Breast epithelium (tissue), 4 donors: ENCODE measurements at regions of chr17 and their contacts with region 1.

Region 1: DNA sequence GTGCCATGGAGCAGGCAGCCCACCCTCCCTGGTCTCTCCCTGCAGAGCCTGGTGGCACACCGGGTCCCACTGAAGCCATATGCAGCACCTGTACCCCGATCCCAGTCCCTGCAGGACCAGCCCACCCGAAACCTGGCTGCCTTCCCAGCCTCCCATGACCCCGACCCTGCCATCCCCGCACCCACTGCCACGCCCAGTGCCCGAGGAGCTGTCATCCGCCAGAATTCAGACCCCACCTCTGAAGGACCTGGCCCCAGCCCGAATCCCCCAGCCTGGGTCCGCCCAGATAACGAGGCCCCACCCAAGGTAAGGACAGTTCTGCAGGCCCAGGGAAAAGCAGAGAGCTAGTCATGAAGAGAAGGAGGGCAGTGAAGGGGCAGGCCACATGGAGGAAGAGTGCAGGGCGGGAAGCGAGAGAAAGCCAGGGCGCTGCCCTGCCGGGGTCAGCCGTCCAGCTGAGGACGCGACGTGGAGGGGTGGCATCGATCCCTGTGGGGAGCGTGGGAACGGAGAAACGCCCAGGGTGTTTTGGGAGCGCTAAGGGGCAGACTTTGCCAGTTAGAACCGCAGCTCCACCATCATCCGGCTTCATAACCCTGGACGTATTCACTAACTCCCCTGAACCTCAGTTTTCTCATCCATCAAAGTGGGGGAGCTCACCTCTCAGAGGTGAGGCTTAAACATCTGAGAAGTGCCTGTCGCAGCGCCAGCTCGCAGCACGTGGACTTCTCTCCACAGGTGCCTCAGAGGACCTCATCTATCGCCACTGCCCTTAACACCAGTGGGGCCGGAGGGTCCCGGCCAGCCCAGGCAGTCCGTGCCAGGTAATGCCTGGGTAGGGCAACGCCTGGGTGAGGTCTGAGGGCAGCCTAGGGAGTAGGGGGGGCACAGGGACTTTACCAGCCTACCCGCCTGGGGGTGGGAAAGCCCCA is 7.7 kb upstream of the C17orf107 start:
- DNase-seq: no peak
- H3K4me3 ChIP-seq: no peak overlapping the region
- H3K27ac ChIP-seq: no peak overlapping the region
- H3K4me1 ChIP-seq: no peaks in the 10 kb centered on the region
- H3K27me3 ChIP-seq: no peaks in the 10 kb centered on the region
- CTCF ChIP-seq: no peak
- POLR2A ChIP-seq: no peak

Region 2: DNA sequence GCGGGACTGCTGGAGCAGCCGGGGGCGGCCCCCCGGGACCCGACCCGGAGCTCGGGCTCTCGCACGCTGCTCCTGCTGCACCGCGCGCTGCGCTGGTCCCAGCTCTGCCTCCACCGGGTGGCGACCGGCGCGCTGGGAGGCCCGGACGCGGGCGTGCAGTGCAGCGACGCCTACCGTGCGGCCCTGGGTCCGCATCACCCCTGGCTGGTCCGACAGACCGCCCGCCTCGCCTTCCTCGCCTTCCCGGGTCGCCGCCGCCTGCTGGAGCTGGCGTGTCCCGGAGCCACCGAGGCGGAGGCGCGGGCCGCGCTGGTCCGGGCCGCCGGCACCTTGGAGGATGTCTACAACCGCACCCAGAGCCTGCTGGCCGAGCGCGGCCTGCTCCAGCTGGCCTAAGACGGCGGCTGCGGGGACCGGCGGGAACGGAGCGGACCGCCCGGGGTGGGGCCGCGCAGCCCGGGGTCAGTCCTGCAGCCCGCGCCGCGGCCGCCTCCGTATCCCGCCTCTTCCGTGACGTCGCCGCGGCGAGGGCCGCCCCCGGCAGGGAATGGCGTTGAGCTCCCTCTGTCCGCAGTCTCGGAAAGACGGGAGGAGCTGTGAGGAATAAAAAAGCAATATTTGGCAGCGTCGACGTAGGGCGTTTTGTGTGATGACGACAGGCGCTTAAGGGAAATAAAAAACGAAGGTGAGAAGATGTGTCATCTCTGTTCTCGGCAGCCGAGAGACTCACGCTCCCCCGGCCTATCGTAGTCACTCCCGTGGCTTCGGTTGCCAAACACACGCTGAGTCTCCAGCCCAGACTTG is 101.6 kb before region 1 on chr17:
- intact Hi-C with region 1: loop called (anchors 5 kb)
- DNase-seq: peak; percentile 75 to 80
- H3K4me3 ChIP-seq: peak overlapping the region; percentile 63 to 92 (median 79)
- H3K27ac ChIP-seq: peak overlapping the region; percentile 91 to 97
- H3K4me1 ChIP-seq: peaks cover 0 to 7% of the 10 kb centered on the region in 2 donors
- H3K27me3 ChIP-seq: no peaks in the 10 kb centered on the region
- CTCF ChIP-seq: peak; percentile 39 to 90 (median 53)
- POLR2A ChIP-seq: peak; percentile 52

Region 3: DNA sequence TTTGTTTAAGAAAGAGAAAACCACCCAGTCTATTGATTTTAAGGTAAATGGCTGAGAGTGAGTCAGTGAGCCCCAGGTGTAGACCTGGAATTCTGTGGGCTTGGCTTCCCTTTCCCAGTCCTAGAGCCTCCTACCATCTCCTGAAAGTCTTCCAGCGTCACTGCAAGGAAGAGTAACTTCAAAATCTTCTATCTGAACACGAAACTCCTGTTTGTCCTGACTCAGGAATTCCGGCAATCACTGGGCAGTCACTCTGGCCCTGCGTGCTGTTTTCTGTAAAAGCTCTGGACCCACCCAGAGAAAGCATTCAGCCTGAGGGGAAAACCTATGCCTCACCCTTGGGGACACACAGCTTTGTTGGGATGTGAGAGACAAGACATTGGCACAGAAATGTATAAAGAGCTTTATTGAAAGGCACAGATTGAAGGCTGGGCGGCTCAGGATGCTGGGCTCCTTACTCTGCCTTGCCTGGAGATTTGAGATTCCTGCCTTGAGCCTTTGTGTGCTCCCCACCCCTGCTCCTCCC is 42.6 kb before region 1 on chr17:
- intact Hi-C with region 1: no loop called
- DNase-seq: peak in 1 of 2 donors; percentile 43
- H3K4me3 ChIP-seq: peak overlapping the region in 1 of 3 donors; percentile 22
- H3K27ac ChIP-seq: peak overlapping the region; percentile 77 to 83
- H3K4me1 ChIP-seq: no peaks in the 10 kb centered on the region
- H3K27me3 ChIP-seq: no peaks in the 10 kb centered on the region
- CTCF ChIP-seq: no peak
- POLR2A ChIP-seq: no peak

Region 4: GRCh38 chr17:4859816-4860625 is 31.7 kb before region 1 on chr17:
- intact Hi-C with region 1: no loop called
- DNase-seq: no peak
- H3K4me3 ChIP-seq: peak overlapping the region; percentile 1 to 60 (median 39)
- H3K27ac ChIP-seq: peak overlapping the region; percentile 64 to 65
- H3K4me1 ChIP-seq: peaks cover 3 to 17% of the 10 kb centered on the region in 2 donors
- H3K27me3 ChIP-seq: no peaks in the 10 kb centered on the region
- CTCF ChIP-seq: no peak
- POLR2A ChIP-seq: no peak